Panc1 (cell line): ENCODE measurements at regions of chr20 and their contacts with region 1.

Region 1: GRCh38 chr20:38645980-38646858 is 44.6 kb downstream of the ARHGAP40 start:
- DNase-seq: no peak
- ATAC-seq: peak; percentile 91
- H3K4me3 ChIP-seq: peak overlapping the region; percentile 9 to 38; a peak in 3 of 4 replicates
- H3K27ac ChIP-seq: no peak overlapping the region
- H3K4me1 ChIP-seq: no peaks in the 10 kb centered on the region
- H3K27me3 ChIP-seq: 0 out of 2 replicates have a peak, but pooled peaks cover 5% of the 10 kb centered on the region
- CTCF ChIP-seq: peak; percentile 97

Region 2: DNA sequence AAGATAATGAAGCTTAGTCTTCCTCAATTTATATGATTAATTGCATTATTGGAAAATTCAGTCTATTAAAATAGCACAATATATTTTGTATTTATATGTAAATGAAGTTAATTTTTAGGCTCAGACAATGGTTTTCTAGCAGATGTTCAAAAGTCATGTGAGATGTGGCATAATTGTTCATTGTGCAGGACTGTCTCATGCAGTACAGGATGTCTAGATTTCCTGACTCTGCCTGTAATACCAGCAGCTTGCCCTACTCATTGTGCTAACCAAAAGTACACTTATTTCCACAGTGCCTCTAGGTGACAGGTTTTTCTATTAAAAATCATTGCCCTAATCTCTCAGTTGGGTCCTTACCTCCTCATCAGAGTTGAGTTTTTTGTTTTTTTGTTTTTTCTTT is 161.2 kb before region 1 on chr20:
- CTCF ChIA-PET with region 1: no interaction called
- POLR2A ChIA-PET with region 1: no interaction called
- in situ Hi-C with region 1: no loop called
- intact Hi-C with region 1: no loop called
- DNase-seq: no peak
- ATAC-seq: no peak
- H3K4me3 ChIP-seq: no peak overlapping the region
- H3K27ac ChIP-seq: no peak overlapping the region
- H3K4me1 ChIP-seq: no peaks in the 10 kb centered on the region
- H3K27me3 ChIP-seq: no peaks in the 10 kb centered on the region
- CTCF ChIP-seq: no peak

Region 3: DNA sequence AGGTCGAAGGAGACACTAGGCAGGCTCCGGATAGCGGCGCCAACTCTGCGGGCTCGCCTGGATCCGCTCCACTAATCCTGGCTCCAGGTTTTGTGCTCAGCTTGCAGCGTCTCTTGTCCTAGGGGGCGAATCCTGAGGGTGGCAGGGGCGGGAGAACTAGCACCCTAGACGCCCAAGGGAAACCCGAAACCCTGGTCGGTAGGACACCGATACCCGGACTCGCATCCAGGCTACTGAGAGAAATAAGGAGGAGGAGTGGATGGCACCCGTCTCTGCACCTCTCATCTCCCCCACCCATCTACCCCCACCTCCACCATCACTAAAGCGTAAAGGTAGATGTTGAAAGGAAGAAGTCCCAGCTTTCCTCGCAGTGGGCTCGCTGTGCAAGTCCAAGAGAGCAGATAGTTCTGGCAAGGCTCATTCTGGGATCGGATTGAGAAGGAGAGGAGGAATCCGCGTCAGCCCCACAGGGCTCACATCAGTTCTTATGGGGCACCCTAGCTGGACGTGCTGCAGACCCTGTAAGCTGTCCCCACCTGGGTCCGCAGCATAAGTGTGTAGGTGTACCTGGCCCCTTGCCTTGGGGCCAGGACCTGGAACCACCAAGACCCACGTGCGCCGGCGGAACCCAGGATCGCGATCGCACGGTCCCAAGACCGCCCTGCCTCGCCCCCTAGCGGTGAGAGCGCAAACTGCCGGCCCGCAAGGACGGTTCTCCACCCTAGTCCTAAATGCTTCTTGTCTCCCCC is 84.9 kb after region 1 on chr20:
- CTCF ChIA-PET with region 1: interaction called, 4 read pairs
- POLR2A ChIA-PET with region 1: no interaction called
- in situ Hi-C with region 1: no loop called
- intact Hi-C with region 1: loop called (anchors 5 kb)
- DNase-seq: peak; percentile 51
- ATAC-seq: peak; percentile 90
- H3K4me3 ChIP-seq: peak overlapping the region; percentile 33 to 52
- H3K27ac ChIP-seq: no peak overlapping the region
- H3K4me1 ChIP-seq: peaks cover 6% of the 10 kb centered on the region; the same call in 1 of the 2 replicates
- H3K27me3 ChIP-seq: peaks cover 41% of the 10 kb centered on the region
- CTCF ChIP-seq: peak; percentile 99

Region 4: GRCh38 chr20:38748097-38748860 is 102.1 kb after region 1 on chr20 and contains the start of gene ACTR5:
- CTCF ChIA-PET with region 1: interaction called, 3 read pairs
- POLR2A ChIA-PET with region 1: no interaction called
- in situ Hi-C with region 1: no loop called
- intact Hi-C with region 1: loop called (anchors 1 kb)
- DNase-seq: peak; percentile 72
- ATAC-seq: peak; percentile 96
- H3K4me3 ChIP-seq: peak within 1 kb of the TSS; percentile 90 to 95
- H3K27ac ChIP-seq: peak within 1 kb of the TSS; percentile 84
- H3K4me1 ChIP-seq: peaks cover 14% of the 10 kb centered on the region
- H3K27me3 ChIP-seq: no peaks in the 10 kb centered on the region
- CTCF ChIP-seq: no peak
- total RNA-seq, gene ACTR5: 12.1 TPM

Region 5: DNA sequence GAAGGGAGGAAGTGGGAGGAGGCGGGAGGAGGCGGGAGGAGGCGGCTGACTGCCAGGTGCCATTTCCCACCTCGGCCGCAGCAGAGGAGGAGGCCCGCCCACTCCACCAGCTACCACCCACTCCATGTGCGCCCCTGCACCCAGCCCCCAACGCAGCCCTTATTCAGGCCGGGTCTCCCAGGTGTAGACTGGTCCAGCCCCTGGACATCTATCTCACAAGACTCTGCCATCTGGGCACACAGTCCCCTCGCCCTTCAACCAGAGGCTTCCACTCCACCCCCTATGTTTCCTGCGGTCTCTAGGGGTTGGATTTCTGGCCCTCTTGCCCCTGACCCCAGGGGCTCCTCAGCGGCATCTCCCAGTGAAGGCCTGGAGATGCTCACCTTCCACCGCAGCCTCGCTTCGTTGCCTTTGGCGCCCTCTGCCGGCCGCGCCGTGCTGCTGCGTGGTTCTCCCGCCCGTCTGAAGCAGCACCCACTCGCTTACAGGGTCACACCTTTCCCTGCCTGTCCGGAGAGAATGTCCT is 247.4 kb after region 1 on chr20:
- CTCF ChIA-PET with region 1: interaction called, 5 read pairs
- POLR2A ChIA-PET with region 1: interaction called, 3 read pairs
- in situ Hi-C with region 1: no loop called
- intact Hi-C with region 1: loop called (anchors 5 kb)
- DNase-seq: peak; percentile 39
- ATAC-seq: peak; percentile 93
- H3K4me3 ChIP-seq: no peak overlapping the region
- H3K27ac ChIP-seq: no peak overlapping the region
- H3K4me1 ChIP-seq: no peaks in the 10 kb centered on the region
- H3K27me3 ChIP-seq: peaks cover 12% of the 10 kb centered on the region
- CTCF ChIP-seq: peak; percentile 98